ENCODE measurements at regions of chr14 and their contacts with region 1.

Region 1: GRCh38 chr14:35416108-35416750 is 11.7 kb upstream of the NFKBIA start:
- DNase-seq: peak; percentile 32 to 91 (median 54)
- H3K4me3 ChIP-seq: no peak overlapping the region
- H3K4me3 Mint-ChIP-seq: peak overlapping the region; percentile 8 to 84 (median 68)
- H3K27ac ChIP-seq: peak overlapping the region; percentile 72
- H3K27ac Mint-ChIP-seq: peak overlapping the region; percentile 86 to 96 (median 92)
- H3K4me1 ChIP-seq: peaks cover 40% of the 10 kb centered on the region
- H3K4me1 Mint-ChIP-seq: peaks cover 36 to 49% (median 41%) of the 10 kb centered on the region in 4 donors
- H3K27me3 ChIP-seq: no peaks in the 10 kb centered on the region
- H3K27me3 Mint-ChIP-seq: no peaks in the 10 kb centered on the region

Region 2: GRCh38 chr14:35046048-35046741 is 370.0 kb before region 1 on chr14 and contains the start of gene FAM177A1:
- CTCF ChIA-PET with region 1: interaction called, 4 read pairs
- POLR2A ChIA-PET with region 1: interaction called, 13 read pairs
- intact Hi-C with region 1: no loop called
- DNase-seq: peak; percentile 98 to 100 (median 99)
- H3K4me3 ChIP-seq: peak within 1 kb of the TSS; percentile 76 to 92
- H3K4me3 Mint-ChIP-seq: peak within 1 kb of the TSS; percentile 87 to 100 (median 96)
- H3K27ac ChIP-seq: peak within 1 kb of the TSS; percentile 98
- H3K27ac Mint-ChIP-seq: peak within 1 kb of the TSS; percentile 95 to 100 (median 99)
- H3K4me1 ChIP-seq: peaks cover 24% of the 10 kb centered on the region
- H3K4me1 Mint-ChIP-seq: peaks cover 19 to 38% (median 30%) of the 10 kb centered on the region in 4 donors
- H3K27me3 ChIP-seq: no peaks in the 10 kb centered on the region
- H3K27me3 Mint-ChIP-seq: no peaks in the 10 kb centered on the region
- total RNA-seq, gene FAM177A1: 35.2 to 41.5 TPM

Region 3: GRCh38 chr14:35140718-35141581 is 275.3 kb before region 1 on chr14:
- CTCF ChIA-PET with region 1: interaction called, 73 read pairs
- POLR2A ChIA-PET with region 1: interaction called, 4 read pairs
- intact Hi-C with region 1: loop called (anchors 1 kb)
- DNase-seq: peak in 4 of 5 donors; percentile 38 to 61 (median 53)
- H3K4me3 ChIP-seq: no peak overlapping the region
- H3K4me3 Mint-ChIP-seq: no peak overlapping the region
- H3K27ac ChIP-seq: no peak overlapping the region
- H3K27ac Mint-ChIP-seq: peak overlapping the region; percentile 14 to 92 (median 84)
- H3K4me1 ChIP-seq: peaks cover 10% of the 10 kb centered on the region
- H3K4me1 Mint-ChIP-seq: peaks cover 15 to 23% (median 19%) of the 10 kb centered on the region in 4 donors
- H3K27me3 ChIP-seq: no peaks in the 10 kb centered on the region
- H3K27me3 Mint-ChIP-seq: no peaks in the 10 kb centered on the region

Region 4: GRCh38 chr14:35292051-35292769 is 124.0 kb before region 1 on chr14 and contains the start of gene PSMA6:
- CTCF ChIA-PET with region 1: interaction called, 5 read pairs
- POLR2A ChIA-PET with region 1: interaction called, 14 read pairs
- intact Hi-C with region 1: no loop called
- DNase-seq: peak; percentile 98 to 100 (median 99)
- H3K4me3 ChIP-seq: peak within 1 kb of the TSS; percentile 77 to 91
- H3K4me3 Mint-ChIP-seq: peak within 1 kb of the TSS; percentile 93 to 99 (median 98)
- H3K27ac ChIP-seq: peak within 1 kb of the TSS; percentile 97
- H3K27ac Mint-ChIP-seq: peak within 1 kb of the TSS; percentile 96 to 99 (median 98)
- H3K4me1 ChIP-seq: peaks cover 48% of the 10 kb centered on the region
- H3K4me1 Mint-ChIP-seq: peaks cover 30 to 65% (median 43%) of the 10 kb centered on the region in 4 donors
- H3K27me3 ChIP-seq: no peaks in the 10 kb centered on the region
- H3K27me3 Mint-ChIP-seq: no peaks in the 10 kb centered on the region
- total RNA-seq, gene PSMA6: 84.6 to 86.2 TPM

Region 5: DNA sequence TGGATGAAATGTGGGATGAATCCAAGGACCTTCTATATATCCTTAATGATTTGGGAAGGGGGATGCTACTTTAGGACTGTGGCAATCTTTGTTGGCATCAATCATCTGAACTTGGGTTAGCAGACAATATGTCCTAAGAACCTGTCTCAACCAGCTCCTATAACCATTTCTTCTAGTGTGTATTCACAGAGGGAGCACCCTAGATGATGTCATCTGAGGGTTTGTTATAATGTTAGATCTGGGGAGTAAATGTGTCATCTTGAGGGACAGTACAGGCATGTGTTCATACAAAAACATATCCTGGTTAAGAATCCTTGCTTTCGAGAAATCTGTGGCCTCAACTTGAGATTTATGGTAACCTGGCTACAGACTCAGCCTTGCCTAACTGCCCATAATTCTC is 30.2 kb after region 1 on chr14:
- CTCF ChIA-PET with region 1: no interaction called
- POLR2A ChIA-PET with region 1: no interaction called
- intact Hi-C with region 1: no loop called
- DNase-seq: no peak
- H3K4me3 ChIP-seq: no peak overlapping the region
- H3K4me3 Mint-ChIP-seq: no peak overlapping the region
- H3K27ac ChIP-seq: no peak overlapping the region
- H3K27ac Mint-ChIP-seq: no peak overlapping the region
- H3K4me1 ChIP-seq: no peaks in the 10 kb centered on the region
- H3K4me1 Mint-ChIP-seq: no peaks in the 10 kb centered on the region
- H3K27me3 ChIP-seq: no peaks in the 10 kb centered on the region
- H3K27me3 Mint-ChIP-seq: no peaks in the 10 kb centered on the region